Cardiac septum (tissue), 1 donor: ENCODE measurements at regions of chr21 and their contacts with region 1.

Region 1: GRCh38 chr21:41361786-41362604 is at the start of gene MX2:
- DNase-seq: peak; percentile 90
- total RNA-seq, gene MX2: 5.0 TPM

Region 2: DNA sequence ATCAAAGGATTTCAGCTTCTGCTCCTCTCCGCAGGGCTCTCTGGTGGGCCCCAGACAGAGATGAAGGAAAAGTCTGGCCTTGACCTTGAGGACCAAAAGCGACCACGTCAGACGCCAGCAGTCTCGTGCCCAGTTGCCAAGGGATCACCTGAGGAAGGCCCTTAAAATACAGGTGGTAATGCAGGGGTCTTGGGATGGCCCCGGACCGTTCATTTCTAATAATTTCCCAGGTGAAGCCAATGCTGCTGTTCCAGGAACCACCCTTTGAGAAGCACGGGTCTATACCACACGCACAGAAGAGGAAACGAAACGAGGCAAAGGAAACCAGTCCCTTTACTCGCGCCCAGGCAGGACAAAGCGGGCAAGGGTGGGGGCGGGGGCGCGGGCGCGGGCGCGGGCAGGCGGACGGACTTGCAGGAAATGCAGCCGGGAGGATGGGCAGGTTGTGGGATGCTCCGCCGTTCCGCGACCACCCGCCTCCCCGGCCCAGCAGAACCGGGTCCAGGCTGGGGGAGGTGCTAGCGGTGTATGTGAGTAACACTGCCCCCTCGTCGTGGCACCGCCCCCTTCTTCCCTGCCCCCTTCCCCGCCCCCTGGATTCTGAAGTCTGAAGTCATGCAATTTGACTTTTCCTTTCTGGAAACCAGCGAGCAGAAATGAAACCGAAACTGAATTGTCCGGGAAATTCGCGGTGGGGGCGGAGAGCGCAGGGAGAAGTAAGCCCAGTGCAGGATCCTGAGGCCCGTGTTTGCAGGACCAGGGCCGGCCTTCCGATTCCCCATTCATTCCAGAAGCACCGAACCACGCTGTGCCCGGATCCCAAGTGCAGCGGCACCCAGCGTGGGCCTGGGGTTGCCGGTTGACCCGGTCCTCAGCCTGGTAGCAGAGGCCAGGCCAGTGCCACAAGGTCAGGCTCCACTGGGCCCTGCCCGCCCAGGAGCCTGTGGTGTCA is 58.2 kb after region 1 on chr21:
- intact Hi-C with region 1: loop called (anchors 5 kb)
- DNase-seq: peak; percentile 93